ENCODE measurements at regions of chr5 and their contacts with region 1.

Region 1: GRCh38 chr5:149141224-149141956 is at the start of gene ABLIM3:
- DNase-seq: peak; percentile 61
- H3K4me3 Mint-ChIP-seq: peak within 1 kb of the TSS; percentile 43
- H3K27ac Mint-ChIP-seq: no peak within 1 kb of the TSS
- H3K4me1 Mint-ChIP-seq: no peaks in the 10 kb centered on the region
- H3K27me3 Mint-ChIP-seq: peaks cover 32% of the 10 kb centered on the region
- total RNA-seq, gene ABLIM3: not detected in 2 replicates

Region 2: GRCh38 chr5:149128023-149128875 is 13.1 kb before region 1 on chr5:
- intact Hi-C with region 1: no loop called
- DNase-seq: no peak
- H3K4me3 Mint-ChIP-seq: no peak overlapping the region
- H3K27ac Mint-ChIP-seq: no peak overlapping the region
- H3K4me1 Mint-ChIP-seq: no peaks in the 10 kb centered on the region
- H3K27me3 Mint-ChIP-seq: peaks cover 8% of the 10 kb centered on the region

Region 3: DNA sequence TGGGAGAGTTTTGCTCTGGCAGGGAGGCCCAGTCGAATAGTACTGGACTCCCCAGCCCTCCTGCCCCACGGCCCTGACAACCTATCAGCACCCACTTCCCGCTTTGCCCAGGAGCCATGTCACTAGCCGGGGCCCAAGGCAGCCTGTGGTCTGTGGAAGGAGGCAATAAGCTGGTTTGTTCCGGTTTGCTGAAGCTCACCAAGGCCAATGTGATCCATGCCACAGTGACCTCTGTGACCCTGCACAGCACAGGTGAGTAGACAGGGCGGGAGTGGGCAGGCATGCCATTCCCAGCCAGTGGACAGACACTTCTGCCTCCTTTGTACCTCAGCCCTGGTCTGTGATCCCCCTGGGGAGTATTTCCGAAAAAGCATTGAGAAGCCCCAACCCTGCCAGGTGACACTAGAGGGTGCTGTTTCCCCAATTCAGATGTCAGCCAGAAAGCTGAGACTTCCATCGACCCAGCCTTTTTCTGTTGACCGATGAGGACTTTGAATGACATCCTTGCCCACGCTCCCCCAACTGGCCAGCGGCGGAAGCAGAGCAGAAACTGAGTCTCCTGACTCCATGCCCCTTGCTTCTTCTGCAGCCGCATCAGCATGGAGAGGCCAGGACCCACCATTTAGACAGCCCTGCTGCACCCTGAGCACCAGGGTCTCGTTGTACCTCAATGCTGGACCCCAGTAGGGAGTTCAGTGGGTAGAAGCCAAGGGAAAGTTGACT is 226.0 kb after region 1 on chr5:
- intact Hi-C with region 1: loop called (anchors 1 kb)
- DNase-seq: peak; percentile 37
- H3K4me3 Mint-ChIP-seq: no peak overlapping the region
- H3K27ac Mint-ChIP-seq: no peak overlapping the region
- H3K4me1 Mint-ChIP-seq: peaks cover 17% of the 10 kb centered on the region
- H3K27me3 Mint-ChIP-seq: peaks cover 2% of the 10 kb centered on the region